Activated CD4-positive, alpha-beta memory T cell treated with anti-CD3 and anti-CD28 coated beads for 36 hours (primary cell): ENCODE measurements at regions of chr6 and their contacts with region 1.

Region 1: GRCh38 chr6:11093589-11094410 is at the start of gene SMIM13:
- DNase-seq: peak; percentile 97
- H3K4me3 Mint-ChIP-seq: peak within 1 kb of the TSS; percentile 97
- H3K27ac Mint-ChIP-seq: peak within 1 kb of the TSS; percentile 98
- H3K4me1 Mint-ChIP-seq: peaks cover 27% of the 10 kb centered on the region
- H3K27me3 Mint-ChIP-seq: no peaks in the 10 kb centered on the region
- total RNA-seq, gene SMIM13: 7.2 to 9.5 TPM

Region 2: GRCh38 chr6:10465629-10466504 is 627.9 kb before region 1 on chr6:
- CTCF ChIA-PET with region 1: no interaction called
- POLR2A ChIA-PET with region 1: no interaction called
- intact Hi-C with region 1: no loop called
- DNase-seq: peak; percentile 32
- H3K4me3 Mint-ChIP-seq: no peak overlapping the region
- H3K27ac Mint-ChIP-seq: no peak overlapping the region
- H3K4me1 Mint-ChIP-seq: no peaks in the 10 kb centered on the region
- H3K27me3 Mint-ChIP-seq: peaks cover 17% of the 10 kb centered on the region

Region 3: GRCh38 chr6:10694302-10695085 is 399.3 kb before region 1 on chr6 and contains the starts of genes C6orf52 and PAK1IP1:
- CTCF ChIA-PET with region 1: no interaction called
- POLR2A ChIA-PET with region 1: no interaction called
- intact Hi-C with region 1: loop called (anchors 1 kb)
- DNase-seq: peak; percentile 95
- H3K4me3 Mint-ChIP-seq: peak within 1 kb of the TSS; percentile 93
- H3K27ac Mint-ChIP-seq: peak within 1 kb of the TSS; percentile 99
- H3K4me1 Mint-ChIP-seq: peaks cover 32% of the 10 kb centered on the region
- H3K27me3 Mint-ChIP-seq: no peaks in the 10 kb centered on the region
- total RNA-seq, gene C6orf52: 2.4 to 3.7 TPM
- total RNA-seq, gene PAK1IP1: 28.2 to 32.8 TPM

Region 4: GRCh38 chr6:10747251-10747972 is 346.4 kb before region 1 on chr6 and contains the start of gene TMEM14B:
- CTCF ChIA-PET with region 1: interaction called, 3 read pairs
- POLR2A ChIA-PET with region 1: no interaction called
- intact Hi-C with region 1: loop called (anchors 5 kb)
- DNase-seq: peak; percentile 100
- H3K4me3 Mint-ChIP-seq: peak within 1 kb of the TSS; percentile 88
- H3K27ac Mint-ChIP-seq: peak within 1 kb of the TSS; percentile 86
- H3K4me1 Mint-ChIP-seq: peaks cover 47% of the 10 kb centered on the region
- H3K27me3 Mint-ChIP-seq: no peaks in the 10 kb centered on the region
- total RNA-seq, gene TMEM14B: 86.9 to 91.3 TPM

Region 5: GRCh38 chr6:11120271-11121005 is 26.6 kb after region 1 on chr6:
- CTCF ChIA-PET with region 1: no interaction called
- POLR2A ChIA-PET with region 1: no interaction called
- intact Hi-C with region 1: loop called (anchors 1 kb)
- DNase-seq: no peak
- H3K4me3 Mint-ChIP-seq: no peak overlapping the region
- H3K27ac Mint-ChIP-seq: no peak overlapping the region
- H3K4me1 Mint-ChIP-seq: peaks cover 22% of the 10 kb centered on the region
- H3K27me3 Mint-ChIP-seq: no peaks in the 10 kb centered on the region

Region 6: GRCh38 chr6:11232193-11232769 is 138.5 kb after region 1 on chr6 and contains the start of gene NEDD9:
- CTCF ChIA-PET with region 1: no interaction called
- POLR2A ChIA-PET with region 1: no interaction called
- intact Hi-C with region 1: loop called (anchors 2 kb)
- DNase-seq: peak; percentile 98
- H3K4me3 Mint-ChIP-seq: peak within 1 kb of the TSS; percentile 81
- H3K27ac Mint-ChIP-seq: peak within 1 kb of the TSS; percentile 96
- H3K4me1 Mint-ChIP-seq: peaks cover 65% of the 10 kb centered on the region
- H3K27me3 Mint-ChIP-seq: no peaks in the 10 kb centered on the region
- total RNA-seq, gene NEDD9: 26.6 to 31.5 TPM

Region 7: DNA sequence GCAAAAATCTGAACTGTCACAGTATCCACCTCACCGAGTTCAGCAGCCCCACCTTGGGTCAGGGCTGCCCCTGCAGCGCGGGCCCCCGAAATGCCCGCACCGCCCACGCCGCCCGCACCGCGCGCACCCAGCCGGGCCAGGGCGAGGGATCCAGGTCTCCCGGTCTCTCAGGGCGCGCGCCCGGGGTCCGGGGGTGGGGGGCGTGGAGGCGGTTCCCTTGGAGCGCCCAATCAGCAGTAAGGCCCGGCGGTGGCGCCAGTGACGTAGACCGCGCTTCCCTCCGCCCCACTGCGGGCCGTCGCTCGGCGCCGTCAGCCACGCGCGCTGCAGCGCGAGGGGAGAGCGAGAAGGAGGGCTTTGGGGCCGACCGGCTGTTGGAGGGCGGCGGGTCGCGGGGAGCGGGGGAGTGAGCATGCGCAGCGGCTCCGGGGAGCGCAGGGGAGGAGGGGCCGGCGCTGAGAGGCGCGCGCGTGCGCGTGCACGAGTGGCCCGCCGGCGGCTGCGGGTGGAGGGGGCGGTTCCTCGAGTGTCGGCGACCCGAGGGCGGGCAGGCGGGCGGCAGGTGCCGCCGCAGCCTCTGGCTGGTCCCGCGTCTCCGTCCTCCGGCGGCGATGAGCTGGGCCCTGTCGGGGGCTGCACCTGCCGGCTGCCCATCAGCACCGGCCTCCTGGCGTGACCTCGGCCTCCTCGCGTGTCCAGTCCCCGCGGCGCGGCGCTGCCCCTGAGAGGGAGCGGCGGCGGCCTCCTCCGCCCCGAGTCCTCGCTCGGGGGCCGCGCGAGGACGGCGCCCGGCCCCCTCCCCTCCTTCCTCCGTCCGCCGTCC is 443.6 kb after region 1 on chr6 and contains the start of gene TMEM170B:
- CTCF ChIA-PET with region 1: no interaction called
- POLR2A ChIA-PET with region 1: no interaction called
- intact Hi-C with region 1: loop called (anchors 1 kb)
- DNase-seq: peak; percentile 94
- H3K4me3 Mint-ChIP-seq: peak within 1 kb of the TSS; percentile 73
- H3K27ac Mint-ChIP-seq: no peak within 1 kb of the TSS
- H3K4me1 Mint-ChIP-seq: peaks cover 9% of the 10 kb centered on the region
- H3K27me3 Mint-ChIP-seq: peaks cover 14% of the 10 kb centered on the region
- total RNA-seq, gene TMEM170B: 0.83 to 1.1 TPM